GM12878 (cell line): ENCODE measurements at regions of chr17 and their contacts with region 1.

Region 1: GRCh38 chr17:39872751-39873150 is 4.7 kb downstream of the ZPBP2 start:
- DNase-seq: no peak
- ATAC-seq: 0 out of 3 replicates have a peak, but pooled peaks have one; percentile 19
- H3K4me3 ChIP-seq: no peak overlapping the region
- H3K27ac ChIP-seq: no peak overlapping the region; the same call in 1 of the 2 replicates
- H3K4me1 ChIP-seq: peaks cover 32% of the 10 kb centered on the region
- H3K27me3 ChIP-seq: no peaks in the 10 kb centered on the region
- CTCF ChIP-seq: peak in 2 of 3 experiments; percentile 19; a peak in 2 of 6 replicates
- EP300 ChIP-seq: no peak
- POLR2A ChIP-seq: no peak
- RAD21 ChIP-seq: peak; percentile 62

Region 2: DNA sequence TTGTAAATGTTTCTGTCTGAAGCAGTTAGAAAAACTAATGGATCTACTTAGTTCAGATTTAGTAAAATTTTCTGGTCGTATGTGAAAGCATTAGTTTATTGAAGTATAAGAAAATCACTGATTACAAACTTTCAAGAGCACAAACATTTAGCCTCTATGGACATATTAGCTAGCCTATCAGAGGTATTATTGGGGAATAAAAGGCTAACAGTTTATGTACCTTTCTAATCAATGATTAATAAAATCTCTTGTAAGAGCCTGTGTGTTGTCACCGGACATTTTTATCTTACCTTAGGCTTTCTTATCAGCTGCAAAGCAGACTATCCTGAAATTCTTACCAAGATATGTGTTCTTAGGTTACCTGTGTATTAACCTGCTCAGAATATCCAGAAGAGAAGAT is 16.4 kb after region 1 on chr17:
- CTCF ChIA-PET with region 1: interaction called, 14 read pairs
- POLR2A ChIA-PET with region 1: interaction called, 5 read pairs
- RAD21 ChIA-PET with region 1: interaction called, 8 read pairs
- SMC1A ChIA-PET with region 1: interaction called, 11 read pairs
- in situ Hi-C with region 1: no loop called
- intact Hi-C with region 1: no loop called
- DNase-seq: no peak
- ATAC-seq: no peak
- H3K4me3 ChIP-seq: no peak overlapping the region
- H3K27ac ChIP-seq: no peak overlapping the region
- H3K4me1 ChIP-seq: no peaks in the 10 kb centered on the region
- H3K27me3 ChIP-seq: no peaks in the 10 kb centered on the region
- CTCF ChIP-seq: no peak
- EP300 ChIP-seq: no peak
- POLR2A ChIP-seq: no peak
- RAD21 ChIP-seq: no peak

Region 3: GRCh38 chr17:39916918-39917317 is 44.2 kb after region 1 on chr17:
- CTCF ChIA-PET with region 1: interaction called, 25 read pairs
- POLR2A ChIA-PET with region 1: interaction called, 4 read pairs
- RAD21 ChIA-PET with region 1: interaction called, 9 read pairs
- SMC1A ChIA-PET with region 1: interaction called, 19 read pairs
- in situ Hi-C with region 1: no loop called
- intact Hi-C with region 1: loop called (anchors 1 kb)
- DNase-seq: no peak
- ATAC-seq: no peak
- H3K4me3 ChIP-seq: no peak overlapping the region
- H3K27ac ChIP-seq: no peak overlapping the region
- H3K4me1 ChIP-seq: peaks cover 33% of the 10 kb centered on the region
- H3K27me3 ChIP-seq: no peaks in the 10 kb centered on the region
- CTCF ChIP-seq: no peak
- EP300 ChIP-seq: no peak
- POLR2A ChIP-seq: no peak
- RAD21 ChIP-seq: no peak

Region 4: DNA sequence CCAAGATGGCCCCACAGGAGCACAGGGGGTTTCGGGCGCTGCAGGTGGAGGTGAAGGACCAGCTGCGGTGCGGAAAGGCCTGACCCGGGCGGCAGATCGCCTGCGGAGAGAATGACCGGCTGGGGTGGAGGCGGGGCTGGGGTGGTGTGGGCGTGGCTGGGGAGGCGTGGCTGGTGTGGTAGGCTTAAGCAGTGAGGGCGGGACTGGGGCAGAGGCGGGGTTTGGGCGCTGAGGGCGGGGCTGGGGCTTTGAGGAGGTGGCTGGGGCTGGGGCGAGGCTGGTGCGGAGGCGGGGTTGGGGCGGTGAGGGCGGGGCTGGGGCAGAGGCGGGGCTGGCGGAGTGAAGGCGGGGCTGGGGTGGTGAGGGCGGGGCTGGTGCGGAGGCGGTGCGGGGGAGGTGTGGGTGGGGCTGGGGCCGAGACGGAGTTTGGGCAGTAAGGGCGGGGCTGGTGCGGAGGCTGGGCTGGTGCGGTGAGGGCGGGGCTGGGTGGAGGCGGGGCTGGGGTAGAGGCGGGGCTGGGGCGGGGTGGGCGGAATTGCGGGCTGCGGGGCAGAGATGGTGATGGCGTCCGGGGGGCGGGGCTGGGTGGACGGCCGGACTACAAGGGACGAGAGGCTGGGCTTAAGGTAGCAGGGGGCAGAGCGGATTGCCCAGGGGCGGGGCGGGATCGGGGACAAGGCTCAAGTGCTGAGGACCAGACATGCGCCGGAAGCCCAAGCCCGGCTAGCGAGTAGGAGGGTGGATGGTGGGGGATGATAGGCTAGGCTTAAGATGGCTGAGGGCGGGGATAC is 80.1 kb after region 1 on chr17:
- CTCF ChIA-PET with region 1: interaction called, 44 read pairs
- POLR2A ChIA-PET with region 1: interaction called, 9 read pairs
- RAD21 ChIA-PET with region 1: interaction called, 4 read pairs
- SMC1A ChIA-PET with region 1: interaction called, 10 read pairs
- in situ Hi-C with region 1: no loop called
- intact Hi-C with region 1: loop called (anchors 2 kb)
- DNase-seq: peak; percentile 79
- ATAC-seq: peak; percentile 97
- H3K4me3 ChIP-seq: peak overlapping the region; percentile 76
- H3K27ac ChIP-seq: peak overlapping the region; percentile 40; the same call in 1 of the 2 replicates
- H3K4me1 ChIP-seq: peaks cover 3% of the 10 kb centered on the region; the same call in 1 of the 2 replicates
- H3K27me3 ChIP-seq: no peaks in the 10 kb centered on the region
- CTCF ChIP-seq: no peak
- EP300 ChIP-seq: no peak
- POLR2A ChIP-seq: peak; percentile 81; the same call in 1 of the 2 replicates
- RAD21 ChIP-seq: no peak

Region 5: GRCh38 chr17:39974433-39974832 is 101.7 kb after region 1 on chr17:
- CTCF ChIA-PET with region 1: interaction called, 81 read pairs
- POLR2A ChIA-PET with region 1: interaction called, 9 read pairs
- RAD21 ChIA-PET with region 1: interaction called, 44 read pairs
- SMC1A ChIA-PET with region 1: interaction called, 38 read pairs
- in situ Hi-C with region 1: no loop called
- intact Hi-C with region 1: no loop called
- DNase-seq: no peak
- ATAC-seq: no peak
- H3K4me3 ChIP-seq: no peak overlapping the region
- H3K27ac ChIP-seq: no peak overlapping the region
- H3K4me1 ChIP-seq: peaks cover 1% of the 10 kb centered on the region; the same call in 1 of the 2 replicates
- H3K27me3 ChIP-seq: peaks cover 0 to 4% of the 10 kb centered on the region in 2 experiments; a peak in 2 of 4 replicates
- CTCF ChIP-seq: no peak
- EP300 ChIP-seq: no peak
- POLR2A ChIP-seq: no peak
- RAD21 ChIP-seq: no peak

Region 6: DNA sequence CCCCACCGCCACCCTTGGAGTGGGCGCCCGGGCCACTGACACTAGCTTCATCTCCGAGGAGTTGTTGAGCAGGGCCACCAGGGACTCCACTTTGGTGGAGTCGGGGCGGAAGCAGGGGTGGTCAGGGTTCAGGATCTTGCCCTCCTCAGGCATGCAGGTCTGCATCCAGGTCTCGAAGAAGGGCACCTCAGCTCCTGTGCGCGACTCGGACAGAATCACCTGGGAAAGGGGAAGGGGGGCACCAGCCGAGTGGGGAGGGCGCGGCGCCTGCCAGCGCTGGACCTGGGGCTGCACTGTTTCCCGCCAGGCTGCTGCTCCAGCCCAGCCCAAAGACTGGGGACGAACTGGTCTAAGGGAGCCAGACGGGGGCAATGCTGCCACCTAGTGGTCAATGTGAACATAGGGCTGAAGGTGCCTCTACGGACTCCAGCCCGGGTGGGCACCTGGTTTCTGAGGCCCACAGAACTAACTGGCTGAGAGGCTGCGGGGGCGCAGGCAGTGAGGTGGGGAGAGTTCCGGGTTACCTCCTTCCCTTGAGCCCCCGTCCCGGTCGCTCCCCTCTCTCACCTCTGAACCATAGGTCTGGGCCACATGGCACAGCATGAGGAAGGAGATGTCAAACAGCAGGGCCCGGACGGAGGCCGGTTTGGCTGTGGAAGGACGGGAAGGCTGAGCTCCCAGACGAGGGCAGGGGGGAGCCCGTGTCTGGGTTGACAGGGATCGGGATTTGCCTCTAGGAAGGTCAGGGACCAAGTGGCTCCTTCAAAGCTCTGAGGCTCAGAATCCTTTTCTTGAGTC is 154.3 kb after region 1 on chr17:
- CTCF ChIA-PET with region 1: interaction called, 13 read pairs
- POLR2A ChIA-PET with region 1: no interaction called
- RAD21 ChIA-PET with region 1: interaction called, 5 read pairs
- SMC1A ChIA-PET with region 1: interaction called, 3 read pairs
- in situ Hi-C with region 1: no loop called
- intact Hi-C with region 1: no loop called
- DNase-seq: peak; percentile 12
- ATAC-seq: peak; percentile 100
- H3K4me3 ChIP-seq: no peak overlapping the region
- H3K27ac ChIP-seq: no peak overlapping the region
- H3K4me1 ChIP-seq: no peaks in the 10 kb centered on the region
- H3K27me3 ChIP-seq: no peaks in the 10 kb centered on the region
- CTCF ChIP-seq: peak; percentile 80 to 88 (median 86)
- EP300 ChIP-seq: no peak
- POLR2A ChIP-seq: no peak
- RAD21 ChIP-seq: peak; percentile 63